ENCODE measurements at regions of chr6 and their contacts with region 1.

Region 1: GRCh38 chr6:151390276-151391032 is 905 bp downstream of the ZBTB2 start:
- DNase-seq: peak; percentile 98
- ATAC-seq: peak; percentile 74
- H3K4me3 Mint-ChIP-seq: peak overlapping the region; percentile 91
- H3K27ac Mint-ChIP-seq: peak overlapping the region; percentile 75
- H3K4me1 Mint-ChIP-seq: peaks cover 53% of the 10 kb centered on the region
- H3K27me3 Mint-ChIP-seq: no peaks in the 10 kb centered on the region
- CTCF ChIP-seq: no peak

Region 2: GRCh38 chr6:149565527-149566409 is 1824.7 kb before region 1 on chr6 and contains the start of gene GINM1:
- CTCF ChIA-PET with region 1: no interaction called
- POLR2A ChIA-PET with region 1: no interaction called
- intact Hi-C with region 1: loop called (anchors 2 kb)
- DNase-seq: peak; percentile 97
- ATAC-seq: peak; percentile 85
- H3K4me3 Mint-ChIP-seq: peak within 1 kb of the TSS; percentile 93
- H3K27ac Mint-ChIP-seq: peak within 1 kb of the TSS; percentile 92
- H3K4me1 Mint-ChIP-seq: peaks cover 22% of the 10 kb centered on the region
- H3K27me3 Mint-ChIP-seq: no peaks in the 10 kb centered on the region
- CTCF ChIP-seq: no peak
- total RNA-seq, gene GINM1: 15.4 and 18.0 TPM in 2 replicates

Region 3: GRCh38 chr6:151323791-151324487 is 66.5 kb before region 1 on chr6:
- CTCF ChIA-PET with region 1: interaction called, 7 read pairs
- POLR2A ChIA-PET with region 1: interaction called, 7 read pairs
- intact Hi-C with region 1: loop called (anchors 5 kb)
- DNase-seq: peak; percentile 61
- ATAC-seq: peak; percentile 84
- H3K4me3 Mint-ChIP-seq: peak overlapping the region; percentile 53
- H3K27ac Mint-ChIP-seq: no peak overlapping the region
- H3K4me1 Mint-ChIP-seq: peaks cover 23% of the 10 kb centered on the region
- H3K27me3 Mint-ChIP-seq: peaks cover 30% of the 10 kb centered on the region
- CTCF ChIP-seq: no peak

Region 4: GRCh38 chr6:151409260-151409659 is 18.8 kb after region 1 on chr6:
- CTCF ChIA-PET with region 1: interaction called, 17 read pairs
- POLR2A ChIA-PET with region 1: interaction called, 7 read pairs
- intact Hi-C with region 1: loop called (anchors 1 kb)
- DNase-seq: no peak
- ATAC-seq: peak; percentile 72
- H3K4me3 Mint-ChIP-seq: peak overlapping the region; percentile 9
- H3K27ac Mint-ChIP-seq: peak overlapping the region; percentile 60
- H3K4me1 Mint-ChIP-seq: peaks cover 19% of the 10 kb centered on the region
- H3K27me3 Mint-ChIP-seq: no peaks in the 10 kb centered on the region
- CTCF ChIP-seq: no peak

Region 5: DNA sequence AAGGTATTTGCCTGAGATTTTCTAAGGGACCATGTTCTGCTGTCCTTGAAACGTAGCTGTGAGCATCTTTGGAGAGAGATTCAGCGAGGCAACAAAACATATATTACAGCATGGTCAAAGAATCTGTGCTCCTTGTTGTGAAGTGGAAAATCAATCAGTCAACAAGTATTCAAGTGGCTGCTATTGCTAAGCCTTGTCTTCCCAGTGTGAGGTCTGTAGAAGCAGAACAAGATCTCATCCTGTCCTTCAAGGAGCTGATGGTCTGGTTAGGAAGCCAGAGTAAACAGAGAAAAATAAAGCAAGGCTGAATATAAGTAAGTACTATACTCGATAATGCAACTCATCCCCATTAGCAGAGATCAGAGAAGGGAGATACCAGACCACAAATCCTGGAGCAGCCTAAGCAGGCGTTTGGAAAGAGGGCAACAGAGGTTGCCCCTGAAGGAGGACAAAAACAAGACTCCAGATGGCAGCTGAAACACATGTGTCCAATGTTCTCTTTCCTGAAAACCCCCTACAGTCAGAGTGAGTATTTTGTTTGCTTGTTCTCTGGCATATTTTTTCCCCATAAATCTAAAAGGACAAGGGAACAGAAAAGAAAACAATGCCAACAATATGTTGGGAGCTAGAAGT is 854.7 kb after region 1 on chr6:
- CTCF ChIA-PET with region 1: no interaction called
- POLR2A ChIA-PET with region 1: no interaction called
- intact Hi-C with region 1: no loop called
- DNase-seq: no peak
- ATAC-seq: no peak
- H3K4me3 Mint-ChIP-seq: no peak overlapping the region
- H3K27ac Mint-ChIP-seq: no peak overlapping the region
- H3K4me1 Mint-ChIP-seq: no peaks in the 10 kb centered on the region
- H3K27me3 Mint-ChIP-seq: no peaks in the 10 kb centered on the region
- CTCF ChIP-seq: no peak

Region 6: DNA sequence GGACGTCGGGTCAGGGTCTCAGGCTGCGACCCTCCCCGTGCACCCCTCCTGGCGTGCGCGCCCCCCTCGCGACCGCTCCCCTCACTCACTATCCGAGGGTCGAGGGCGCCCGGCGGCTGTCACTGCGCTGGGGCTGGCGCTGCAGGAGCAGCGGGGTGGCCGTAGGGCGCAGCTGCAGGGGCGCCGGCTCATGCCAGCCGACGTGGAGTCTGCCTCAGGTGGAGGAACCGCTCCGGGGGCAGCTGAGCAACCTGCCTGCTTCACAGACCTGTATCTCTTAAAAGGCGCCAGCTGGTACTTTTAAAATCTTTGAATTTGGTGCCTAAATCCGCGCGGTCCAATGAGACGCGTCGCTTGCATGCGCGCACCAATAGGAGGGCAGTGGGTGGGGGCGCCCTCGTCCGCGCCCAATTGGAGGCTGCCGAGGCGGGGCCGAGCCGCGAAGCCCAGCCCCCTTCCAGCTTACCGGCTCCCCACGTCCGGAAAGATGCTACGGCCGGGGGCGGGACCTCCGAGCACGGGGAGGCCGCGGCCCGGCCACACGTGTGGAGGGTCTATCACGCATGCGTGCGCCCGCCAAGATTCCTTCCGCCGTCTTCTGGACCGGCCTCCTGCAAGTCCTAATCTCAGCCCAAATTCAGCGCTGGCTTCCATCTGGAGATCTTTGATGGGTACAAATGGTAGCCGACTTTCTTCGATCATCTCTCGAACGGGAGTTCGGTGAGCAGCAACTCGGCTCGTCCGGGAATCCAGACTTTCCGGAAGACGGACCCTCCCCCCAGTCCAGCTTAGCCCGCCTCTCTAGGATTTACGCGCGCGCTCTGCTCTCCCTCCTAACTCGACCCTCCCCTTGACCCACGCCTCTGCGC is 1592.5 kb after region 1 on chr6 and contains the start of gene FBXO5:
- CTCF ChIA-PET with region 1: no interaction called
- POLR2A ChIA-PET with region 1: no interaction called
- intact Hi-C with region 1: loop called (anchors 2 kb)
- DNase-seq: peak; percentile 95
- ATAC-seq: peak; percentile 92
- H3K4me3 Mint-ChIP-seq: peak within 1 kb of the TSS; percentile 100
- H3K27ac Mint-ChIP-seq: peak within 1 kb of the TSS; percentile 100
- H3K4me1 Mint-ChIP-seq: peaks cover 41% of the 10 kb centered on the region
- H3K27me3 Mint-ChIP-seq: no peaks in the 10 kb centered on the region
- CTCF ChIP-seq: no peak
- total RNA-seq, gene FBXO5: 11.9 and 13.3 TPM in 2 replicates

Measured in activated B cell treated with CpG ODN at 0.5 μM for 24 hours (primary cell).